Common myeloid progenitor, CD34-positive (primary cell): ENCODE measurements at regions of chr16 and their contacts with region 1.

Region 1: DNA sequence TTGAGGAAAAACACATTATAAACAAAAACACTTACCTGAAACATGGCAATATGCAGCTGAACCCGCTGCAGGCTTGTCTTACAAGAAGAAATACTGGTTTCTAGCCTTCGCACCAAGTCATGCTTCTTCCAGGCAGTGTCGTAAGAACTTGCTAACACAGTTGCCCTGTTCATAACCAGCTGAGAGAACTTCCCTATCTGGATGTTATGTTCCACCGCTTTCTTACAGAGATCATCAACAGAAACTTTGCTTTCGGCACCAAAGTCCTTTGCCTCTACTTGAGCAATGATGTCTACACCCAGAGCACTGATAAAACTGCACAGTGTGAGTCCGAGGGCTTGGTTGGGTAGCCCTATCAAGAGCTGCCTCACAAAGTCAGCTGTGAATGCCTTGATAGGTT is 27.9 kb upstream of the ARL6IP1 start:
- DNase-seq: no peak
- H3K4me3 ChIP-seq: no peak overlapping the region
- H3K27ac ChIP-seq: no peak overlapping the region
- H3K4me1 ChIP-seq: no peaks in the 10 kb centered on the region
- H3K27me3 ChIP-seq: no peaks in the 10 kb centered on the region

Region 2: DNA sequence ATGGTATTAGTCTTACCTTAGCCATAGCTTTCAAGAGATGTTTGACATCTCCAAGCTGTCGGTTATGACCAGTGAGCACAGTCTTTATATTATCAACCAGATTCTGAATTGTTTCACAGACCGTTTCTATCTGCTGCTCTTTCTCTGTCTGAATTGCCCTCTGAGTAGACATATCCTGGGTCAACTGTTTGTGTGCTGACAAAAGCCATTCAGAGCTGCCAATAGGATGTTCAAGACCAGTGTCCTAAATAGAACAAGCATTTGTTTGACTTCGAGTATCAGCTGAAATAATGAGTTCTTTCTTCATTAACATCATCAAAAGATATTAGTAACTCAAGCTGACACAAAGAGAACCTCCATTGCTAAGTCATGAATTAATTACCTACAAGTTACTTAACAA is 13.0 kb before region 1 on chr16:
- CTCF ChIA-PET with region 1: interaction called, 11 read pairs
- POLR2A ChIA-PET with region 1: no interaction called
- DNase-seq: no peak
- H3K4me3 ChIP-seq: no peak overlapping the region
- H3K27ac ChIP-seq: no peak overlapping the region
- H3K4me1 ChIP-seq: peaks cover 0 to 8% (median 4%) of the 10 kb centered on the region in 4 experiments
- H3K27me3 ChIP-seq: no peaks in the 10 kb centered on the region